CD8-positive, alpha-beta T cell (primary cell): ENCODE measurements at regions of chr9 and their contacts with region 1.

Region 1: DNA sequence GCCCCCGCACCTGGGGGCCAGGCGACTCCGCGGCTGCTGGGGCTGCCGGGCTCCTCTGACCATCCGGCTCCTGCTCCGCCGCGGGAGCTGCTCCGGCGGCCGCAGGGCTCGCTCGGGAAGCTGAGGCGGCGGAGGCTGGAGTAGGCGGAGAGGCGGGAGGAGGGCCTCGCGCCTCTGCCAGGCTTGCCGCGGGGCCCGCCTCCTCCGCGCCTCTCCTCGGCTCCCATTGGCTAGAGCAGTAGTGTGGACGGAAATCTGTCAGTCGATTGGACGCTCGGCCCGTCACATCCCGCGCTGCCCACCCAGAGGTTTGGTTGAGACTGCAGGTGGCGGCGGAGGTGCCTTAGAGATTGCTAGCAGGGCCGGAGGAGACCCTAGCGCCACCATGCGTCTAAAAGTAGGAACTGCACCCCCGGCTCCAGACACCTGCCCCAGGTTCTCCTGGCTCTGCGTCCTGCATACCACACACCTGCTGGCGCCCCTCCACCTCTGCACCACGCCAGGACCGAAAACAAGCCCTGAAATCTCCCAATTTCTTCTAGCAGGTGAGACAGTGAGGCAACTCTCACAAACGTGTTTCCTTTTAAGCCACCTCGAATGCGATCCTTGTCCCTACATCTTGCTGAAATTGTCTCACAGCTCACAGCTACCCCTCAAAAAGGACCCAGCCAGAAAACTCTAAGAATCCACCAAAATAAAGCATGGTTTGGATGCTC is at the start of gene SCAI:
- DNase-seq: peak; percentile 97 to 99 (median 98)
- ATAC-seq: peak; percentile 98
- H3K4me3 ChIP-seq: peak within 1 kb of the TSS; percentile 49 to 51
- H3K4me3 Mint-ChIP-seq: peak within 1 kb of the TSS; percentile 93
- H3K27ac ChIP-seq: no peak within 1 kb of the TSS
- H3K27ac Mint-ChIP-seq: peak within 1 kb of the TSS; percentile 76
- H3K4me1 ChIP-seq: peaks cover 11% of the 10 kb centered on the region
- H3K4me1 Mint-ChIP-seq: peaks cover 26% of the 10 kb centered on the region
- H3K27me3 ChIP-seq: no peaks in the 10 kb centered on the region
- H3K27me3 Mint-ChIP-seq: no peaks in the 10 kb centered on the region
- CTCF ChIP-seq: peak; percentile 92
- total RNA-seq, gene SCAI: 5.7 to 6.3 TPM

Region 2: GRCh38 chr9:123997665-123998277 is 1145.8 kb before region 1 on chr9:
- CTCF ChIA-PET with region 1: no interaction called
- POLR2A ChIA-PET with region 1: no interaction called
- intact Hi-C with region 1: no loop called
- DNase-seq: peak in 1 of 9 experiments; percentile 56
- ATAC-seq: peak; percentile 26
- H3K4me3 ChIP-seq: no peak overlapping the region
- H3K4me3 Mint-ChIP-seq: peak overlapping the region; percentile 81
- H3K27ac ChIP-seq: no peak overlapping the region
- H3K27ac Mint-ChIP-seq: no peak overlapping the region
- H3K4me1 ChIP-seq: peaks cover 27% of the 10 kb centered on the region
- H3K4me1 Mint-ChIP-seq: peaks cover 27% of the 10 kb centered on the region
- H3K27me3 ChIP-seq: peaks cover 18 to 41% of the 10 kb centered on the region in 2 experiments
- H3K27me3 Mint-ChIP-seq: peaks cover 72% of the 10 kb centered on the region
- CTCF ChIP-seq: no peak

Region 3: DNA sequence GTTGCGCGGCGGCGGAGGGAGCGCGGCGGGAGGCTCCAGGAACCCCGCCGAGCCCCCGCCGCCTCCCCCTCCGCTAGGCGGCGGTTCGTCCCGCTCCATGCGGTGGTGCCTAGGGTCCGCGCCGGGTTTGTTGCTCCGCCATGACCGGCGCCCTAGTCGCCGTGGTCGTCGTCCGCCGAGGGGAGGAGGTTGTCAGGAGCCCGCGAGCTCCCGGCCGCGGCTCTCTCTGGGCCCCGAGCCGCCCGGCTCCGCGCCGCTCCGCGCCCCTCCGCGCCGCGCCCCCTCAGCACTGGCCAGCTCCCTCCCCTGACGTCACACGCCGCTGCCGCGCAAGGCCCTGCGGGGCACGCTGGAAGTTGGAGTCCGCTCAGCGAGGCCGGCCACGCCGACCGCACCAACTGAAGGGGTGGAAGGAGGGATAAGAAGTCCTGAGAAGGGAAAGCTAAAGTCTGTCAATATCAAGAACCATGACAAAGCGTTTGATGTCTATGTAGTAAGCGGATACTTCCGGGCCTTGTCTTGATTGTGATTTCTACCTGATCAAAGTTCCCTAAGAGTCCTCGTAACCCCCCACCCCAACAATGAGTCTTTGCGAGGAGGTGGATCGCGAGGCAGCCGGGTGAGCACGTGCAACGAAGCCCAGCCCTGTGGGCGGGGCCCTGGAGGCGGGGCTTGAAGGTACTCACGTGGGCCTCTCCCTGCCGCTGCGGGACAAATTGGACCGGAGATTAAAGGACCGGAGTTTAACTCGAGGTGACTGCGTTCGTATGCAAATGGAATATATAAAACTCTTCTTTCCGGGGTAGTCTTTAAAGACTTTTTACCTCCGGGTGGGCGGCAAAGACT is 372.3 kb before region 1 on chr9 and contains the start of gene NR6A1:
- CTCF ChIA-PET with region 1: interaction called, 3 read pairs
- POLR2A ChIA-PET with region 1: no interaction called
- intact Hi-C with region 1: loop called (anchors 1 kb)
- DNase-seq: peak; percentile 86 to 97 (median 92)
- ATAC-seq: peak; percentile 90
- H3K4me3 ChIP-seq: peak within 1 kb of the TSS; percentile 59 to 67
- H3K4me3 Mint-ChIP-seq: peak within 1 kb of the TSS; percentile 89
- H3K27ac ChIP-seq: peak within 1 kb of the TSS in 1 of 2 experiments; percentile 58
- H3K27ac Mint-ChIP-seq: peak within 1 kb of the TSS; percentile 82
- H3K4me1 ChIP-seq: peaks cover 21% of the 10 kb centered on the region
- H3K4me1 Mint-ChIP-seq: peaks cover 39% of the 10 kb centered on the region
- H3K27me3 ChIP-seq: peaks cover 24 to 43% of the 10 kb centered on the region in 2 experiments
- H3K27me3 Mint-ChIP-seq: peaks cover 73% of the 10 kb centered on the region
- CTCF ChIP-seq: no peak
- total RNA-seq, gene NR6A1: not detected

Region 4: DNA sequence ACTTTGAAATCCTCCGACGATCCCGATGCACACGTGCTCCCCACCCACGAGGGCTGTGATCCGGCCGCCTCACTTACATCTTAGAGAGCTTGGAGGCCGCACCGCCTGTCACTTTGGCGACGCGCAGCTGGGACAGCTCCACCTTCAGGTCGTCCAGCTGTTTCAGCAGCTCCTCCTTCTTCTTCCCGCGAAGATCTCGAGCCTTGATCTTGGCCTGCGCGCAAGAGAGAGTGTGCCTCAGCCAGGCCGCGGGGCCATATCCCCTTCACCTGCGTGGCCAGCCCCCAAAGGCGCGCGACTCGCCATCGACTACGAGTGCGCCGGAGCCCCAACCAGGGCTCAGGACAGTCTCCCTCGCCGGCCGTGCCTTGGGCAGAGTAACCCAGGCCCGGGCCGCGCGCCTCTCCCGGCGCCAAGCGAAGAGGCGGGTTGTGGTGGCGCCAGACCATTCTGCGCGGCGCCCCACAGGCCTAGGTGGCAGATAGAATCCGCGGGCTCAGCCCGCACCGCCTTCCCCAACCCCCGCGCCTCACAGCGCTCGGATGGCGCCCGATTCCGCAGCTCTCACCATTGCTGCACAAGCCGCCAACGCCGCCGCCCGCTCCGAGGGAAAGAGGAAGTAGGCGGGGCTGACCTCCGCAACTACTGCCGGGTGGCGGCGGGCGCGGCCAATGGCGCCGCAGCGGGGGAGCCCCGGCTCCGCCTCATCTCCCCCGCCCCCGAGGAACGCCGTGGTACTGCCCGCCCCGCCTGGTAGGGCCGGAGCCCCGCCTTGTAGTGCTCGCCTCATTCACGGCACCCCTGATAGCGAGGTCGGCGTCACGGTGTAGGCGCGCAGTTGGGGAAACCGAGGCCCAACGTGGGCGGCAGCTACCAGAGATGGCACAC is 281.9 kb before region 1 on chr9 and contains the starts of genes ARPC5L and RPL35:
- CTCF ChIA-PET with region 1: no interaction called
- POLR2A ChIA-PET with region 1: interaction called, 3 read pairs
- intact Hi-C with region 1: loop called in 1 of 2 experiments (anchors 1 kb)
- DNase-seq: peak; percentile 90 to 97 (median 95)
- ATAC-seq: peak; percentile 95
- H3K4me3 ChIP-seq: peak within 1 kb of the TSS; percentile 67 to 90
- H3K4me3 Mint-ChIP-seq: peak within 1 kb of the TSS; percentile 97
- H3K27ac ChIP-seq: peak within 1 kb of the TSS; percentile 88 to 93
- H3K27ac Mint-ChIP-seq: peak within 1 kb of the TSS; percentile 98
- H3K4me1 ChIP-seq: peaks cover 16% of the 10 kb centered on the region
- H3K4me1 Mint-ChIP-seq: peaks cover 31% of the 10 kb centered on the region
- H3K27me3 ChIP-seq: no peaks in the 10 kb centered on the region
- H3K27me3 Mint-ChIP-seq: no peaks in the 10 kb centered on the region
- CTCF ChIP-seq: no peak
- total RNA-seq, gene ARPC5L: 43.2 to 45.5 TPM
- total RNA-seq, gene RPL35: 1,798 to 1,805 TPM

Region 5: DNA sequence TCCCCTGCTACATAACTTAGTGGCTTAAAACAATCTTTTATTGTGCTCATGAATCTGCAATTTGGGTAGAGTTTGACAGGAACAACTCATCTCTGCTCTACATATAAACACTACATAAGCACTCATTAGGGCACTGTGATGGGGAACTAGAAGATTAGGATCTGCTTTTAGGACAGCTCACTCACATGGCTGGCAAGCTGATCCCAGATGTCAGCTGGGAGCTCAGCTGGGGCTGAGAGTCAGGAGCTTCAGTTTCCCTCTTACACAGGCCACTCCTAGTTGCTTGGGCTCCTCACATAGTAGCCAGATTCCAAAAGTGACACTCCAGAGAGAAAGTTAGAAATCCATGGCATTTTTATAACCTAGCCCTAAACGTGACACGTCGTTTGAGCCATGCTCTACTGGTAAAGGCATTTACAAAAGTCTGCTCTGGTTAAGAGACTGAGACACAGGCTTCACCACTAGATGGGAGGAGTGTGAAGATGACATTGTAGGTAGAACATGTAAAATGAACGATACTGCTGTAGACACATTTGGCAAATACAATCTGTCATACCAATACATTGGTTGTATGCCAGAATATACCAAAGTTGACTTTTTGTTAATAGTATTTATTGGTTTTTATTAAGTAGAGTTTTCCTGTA is 23.8 kb before region 1 on chr9:
- CTCF ChIA-PET with region 1: interaction called, 7 read pairs
- POLR2A ChIA-PET with region 1: interaction called, 5 read pairs
- intact Hi-C with region 1: loop called (anchors 1 kb)
- DNase-seq: peak in 3 of 9 experiments; percentile 29 to 64 (median 44)
- ATAC-seq: peak; percentile 87
- H3K4me3 ChIP-seq: no peak overlapping the region
- H3K4me3 Mint-ChIP-seq: no peak overlapping the region
- H3K27ac ChIP-seq: no peak overlapping the region
- H3K27ac Mint-ChIP-seq: no peak overlapping the region
- H3K4me1 ChIP-seq: peaks cover 15% of the 10 kb centered on the region
- H3K4me1 Mint-ChIP-seq: peaks cover 40% of the 10 kb centered on the region
- H3K27me3 ChIP-seq: no peaks in the 10 kb centered on the region
- H3K27me3 Mint-ChIP-seq: no peaks in the 10 kb centered on the region
- CTCF ChIP-seq: peak; percentile 48

Region 6: GRCh38 chr9:125189361-125190289 is 46.1 kb after region 1 on chr9 and contains the start of gene PPP6C:
- CTCF ChIA-PET with region 1: no interaction called
- POLR2A ChIA-PET with region 1: interaction called, 3 read pairs
- intact Hi-C with region 1: loop called in 1 of 2 experiments (anchors 1 kb)
- DNase-seq: peak; percentile 94 to 99 (median 97)
- ATAC-seq: peak; percentile 95
- H3K4me3 ChIP-seq: peak within 1 kb of the TSS; percentile 98
- H3K4me3 Mint-ChIP-seq: peak within 1 kb of the TSS; percentile 97
- H3K27ac ChIP-seq: peak within 1 kb of the TSS; percentile 97 to 98
- H3K27ac Mint-ChIP-seq: peak within 1 kb of the TSS; percentile 93
- H3K4me1 ChIP-seq: peaks cover 56% of the 10 kb centered on the region
- H3K4me1 Mint-ChIP-seq: peaks cover 71% of the 10 kb centered on the region
- H3K27me3 ChIP-seq: no peaks in the 10 kb centered on the region
- H3K27me3 Mint-ChIP-seq: no peaks in the 10 kb centered on the region
- CTCF ChIP-seq: peak; percentile 63
- total RNA-seq, gene PPP6C: 37.8 to 38.3 TPM

Region 7: DNA sequence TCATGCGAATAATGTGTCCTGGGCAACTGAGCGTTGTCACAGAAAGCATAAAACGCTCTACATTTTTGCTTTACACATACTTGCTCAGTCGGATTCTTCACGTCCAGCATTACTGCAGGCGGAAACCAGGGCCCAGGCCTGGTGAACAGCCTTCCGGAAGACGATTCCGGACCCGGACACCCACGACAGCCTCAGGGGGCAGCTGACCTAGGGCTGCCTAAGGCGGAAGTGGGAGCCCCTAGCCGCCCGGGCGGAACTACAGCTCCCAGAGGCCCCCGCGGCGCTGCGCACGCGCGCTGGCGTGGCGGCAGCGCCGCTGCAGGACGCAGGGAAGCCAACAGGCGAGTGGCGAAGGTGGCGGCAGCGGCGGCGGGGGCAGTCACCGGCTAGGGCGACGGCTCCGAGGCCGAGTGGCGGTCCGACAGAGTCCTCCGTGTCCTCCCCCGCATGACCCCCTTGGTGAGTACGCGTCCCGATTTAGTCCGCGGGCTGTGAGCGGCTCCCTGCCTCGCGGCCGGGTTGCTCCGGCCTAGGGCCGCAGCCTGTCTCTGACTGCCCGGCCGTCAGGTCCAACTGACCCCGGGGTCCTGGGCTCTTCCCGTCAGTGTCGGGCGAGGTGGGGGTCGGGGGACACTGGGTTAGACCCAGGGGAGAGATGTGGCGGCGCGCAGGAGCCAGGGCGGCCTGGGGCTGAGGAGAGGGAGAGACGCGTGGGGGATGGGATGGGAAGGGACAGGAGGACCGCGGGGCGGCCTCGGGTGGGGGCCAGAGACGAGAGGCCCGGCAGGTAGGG is 118.2 kb after region 1 on chr9 and contains the start of gene GAPVD1:
- CTCF ChIA-PET with region 1: no interaction called
- POLR2A ChIA-PET with region 1: no interaction called
- intact Hi-C with region 1: loop called in 1 of 2 experiments (anchors 1 kb)
- DNase-seq: peak; percentile 72 to 94 (median 86)
- ATAC-seq: peak; percentile 92
- H3K4me3 ChIP-seq: peak within 1 kb of the TSS; percentile 90 to 99
- H3K4me3 Mint-ChIP-seq: peak within 1 kb of the TSS; percentile 98
- H3K27ac ChIP-seq: peak within 1 kb of the TSS; percentile 67 to 78
- H3K27ac Mint-ChIP-seq: peak within 1 kb of the TSS; percentile 94
- H3K4me1 ChIP-seq: peaks cover 29% of the 10 kb centered on the region
- H3K4me1 Mint-ChIP-seq: peaks cover 49% of the 10 kb centered on the region
- H3K27me3 ChIP-seq: no peaks in the 10 kb centered on the region
- H3K27me3 Mint-ChIP-seq: peaks cover 2% of the 10 kb centered on the region
- CTCF ChIP-seq: peak; percentile 54
- total RNA-seq, gene GAPVD1: 81.0 to 84.1 TPM